CD4-positive, alpha-beta memory T cell (primary cell): ENCODE measurements at regions of chr5 and their contacts with region 1.

Region 1: DNA sequence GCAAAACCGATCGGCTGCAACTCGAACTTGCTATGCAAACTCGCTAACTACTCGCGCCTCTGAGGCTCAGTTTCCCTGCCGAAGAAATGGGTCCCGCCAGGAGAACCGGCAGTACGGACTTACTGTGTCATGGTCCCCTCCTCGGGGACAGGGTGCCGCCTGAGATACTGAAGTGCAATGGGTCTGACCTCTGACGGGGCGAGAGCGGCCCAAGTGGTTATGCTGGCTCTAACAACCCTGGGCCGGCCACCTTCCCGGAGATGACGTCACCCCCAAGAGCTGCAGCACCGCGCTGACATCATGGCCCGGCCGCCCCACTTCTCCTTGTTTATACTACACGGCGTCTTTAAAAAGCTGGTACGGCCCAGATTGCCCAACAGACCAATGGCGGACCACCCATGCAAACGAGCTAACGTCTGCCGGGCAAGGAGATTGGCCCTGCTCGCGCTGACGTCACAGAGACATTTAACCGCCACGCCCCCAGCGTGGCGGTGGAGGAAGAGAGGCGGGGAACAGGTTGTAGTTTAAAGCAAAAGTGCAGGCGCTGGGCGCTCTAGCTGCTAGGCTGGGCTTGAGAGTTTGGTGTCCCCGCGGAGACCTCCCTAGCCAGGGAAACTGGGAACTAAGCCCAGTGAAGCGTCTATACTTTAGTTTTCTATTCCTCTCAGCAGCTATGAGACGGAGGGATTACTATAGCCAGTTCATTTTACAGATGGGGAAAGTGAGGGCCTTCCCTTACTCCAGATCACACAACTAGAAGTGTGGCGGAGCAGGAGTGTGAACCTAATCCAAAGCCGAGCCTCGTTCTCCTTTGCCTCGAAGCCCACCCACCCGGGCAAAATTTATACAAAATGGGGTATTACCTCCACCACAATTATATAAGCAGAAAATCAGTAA is 654 bp upstream of the RNF44 start:
- DNase-seq: peak; percentile 94 to 100 (median 98)
- H3K4me3 ChIP-seq: peak overlapping the region; percentile 85 to 100
- H3K4me3 Mint-ChIP-seq: peak overlapping the region; percentile 97 to 100 (median 98)
- H3K27ac ChIP-seq: peak overlapping the region; percentile 98
- H3K27ac Mint-ChIP-seq: peak overlapping the region; percentile 99 to 100 (median 100)
- H3K4me1 ChIP-seq: peaks cover 70% of the 10 kb centered on the region
- H3K4me1 Mint-ChIP-seq: peaks cover 55 to 86% (median 66%) of the 10 kb centered on the region in 4 donors
- H3K27me3 ChIP-seq: no peaks in the 10 kb centered on the region
- H3K27me3 Mint-ChIP-seq: no peaks in the 10 kb centered on the region

Region 2: GRCh38 chr5:176388444-176389134 is 149.3 kb before region 1 on chr5 and contains the starts of genes HIGD2A and NOP16:
- CTCF ChIA-PET with region 1: no interaction called
- POLR2A ChIA-PET with region 1: interaction called, 29 read pairs
- intact Hi-C with region 1: loop called (anchors 1 kb)
- DNase-seq: peak; percentile 98 to 100 (median 99)
- H3K4me3 ChIP-seq: peak within 1 kb of the TSS; percentile 90 to 99
- H3K4me3 Mint-ChIP-seq: peak within 1 kb of the TSS; percentile 95 to 100 (median 97)
- H3K27ac ChIP-seq: peak within 1 kb of the TSS; percentile 91
- H3K27ac Mint-ChIP-seq: peak within 1 kb of the TSS; percentile 96 to 100 (median 100)
- H3K4me1 ChIP-seq: peaks cover 33% of the 10 kb centered on the region
- H3K4me1 Mint-ChIP-seq: peaks cover 17 to 45% (median 30%) of the 10 kb centered on the region in 4 donors
- H3K27me3 ChIP-seq: no peaks in the 10 kb centered on the region
- H3K27me3 Mint-ChIP-seq: no peaks in the 10 kb centered on the region
- total RNA-seq, gene HIGD2A: 81.3 to 83.4 TPM
- total RNA-seq, gene NOP16: 16.9 to 19.4 TPM

Region 3: DNA sequence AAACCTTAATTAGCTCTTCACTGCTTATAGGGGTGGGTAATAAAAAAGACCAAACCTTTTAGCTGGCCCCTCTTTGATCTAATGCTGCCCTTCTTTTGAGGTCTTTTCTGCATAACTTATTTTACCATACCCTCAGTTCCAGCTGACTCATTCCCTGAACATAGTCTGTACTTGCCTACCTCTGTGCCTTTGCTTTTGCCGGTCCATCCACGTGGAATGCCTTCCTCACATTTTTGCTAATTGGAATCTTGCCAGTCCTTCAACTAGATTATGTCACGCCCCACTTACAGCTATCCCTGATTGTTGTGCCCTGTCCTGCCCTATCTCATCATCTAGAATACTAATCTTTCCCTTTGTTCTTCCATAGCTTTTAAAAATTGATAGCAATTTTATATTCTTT is 45.4 kb before region 1 on chr5:
- CTCF ChIA-PET with region 1: interaction called, 3 read pairs
- POLR2A ChIA-PET with region 1: interaction called, 8 read pairs
- intact Hi-C with region 1: loop called (anchors 5 kb)
- DNase-seq: no peak
- H3K4me3 ChIP-seq: no peak overlapping the region
- H3K4me3 Mint-ChIP-seq: no peak overlapping the region
- H3K27ac ChIP-seq: no peak overlapping the region
- H3K27ac Mint-ChIP-seq: peak overlapping the region in 5 of 7 donors; percentile 8 to 89 (median 53)
- H3K4me1 ChIP-seq: peaks cover 19% of the 10 kb centered on the region
- H3K4me1 Mint-ChIP-seq: peaks cover 14 to 31% (median 21%) of the 10 kb centered on the region in 4 donors
- H3K27me3 ChIP-seq: no peaks in the 10 kb centered on the region
- H3K27me3 Mint-ChIP-seq: no peaks in the 10 kb centered on the region

Region 4: GRCh38 chr5:176596689-176597416 is 59.0 kb after region 1 on chr5:
- CTCF ChIA-PET with region 1: interaction called, 6 read pairs
- POLR2A ChIA-PET with region 1: interaction called, 7 read pairs
- intact Hi-C with region 1: loop called (anchors 2 kb)
- DNase-seq: peak; percentile 66 to 75 (median 73)
- H3K4me3 ChIP-seq: peak overlapping the region in 1 of 2 donors; percentile 37
- H3K4me3 Mint-ChIP-seq: peak overlapping the region; percentile 78 to 89 (median 82)
- H3K27ac ChIP-seq: no peak overlapping the region
- H3K27ac Mint-ChIP-seq: peak overlapping the region in 2 of 7 donors; percentile 75 to 77
- H3K4me1 ChIP-seq: peaks cover 6% of the 10 kb centered on the region
- H3K4me1 Mint-ChIP-seq: peaks cover 0 to 9% (median 6%) of the 10 kb centered on the region in 4 donors
- H3K27me3 ChIP-seq: no peaks in the 10 kb centered on the region
- H3K27me3 Mint-ChIP-seq: no peaks in the 10 kb centered on the region

Region 5: DNA sequence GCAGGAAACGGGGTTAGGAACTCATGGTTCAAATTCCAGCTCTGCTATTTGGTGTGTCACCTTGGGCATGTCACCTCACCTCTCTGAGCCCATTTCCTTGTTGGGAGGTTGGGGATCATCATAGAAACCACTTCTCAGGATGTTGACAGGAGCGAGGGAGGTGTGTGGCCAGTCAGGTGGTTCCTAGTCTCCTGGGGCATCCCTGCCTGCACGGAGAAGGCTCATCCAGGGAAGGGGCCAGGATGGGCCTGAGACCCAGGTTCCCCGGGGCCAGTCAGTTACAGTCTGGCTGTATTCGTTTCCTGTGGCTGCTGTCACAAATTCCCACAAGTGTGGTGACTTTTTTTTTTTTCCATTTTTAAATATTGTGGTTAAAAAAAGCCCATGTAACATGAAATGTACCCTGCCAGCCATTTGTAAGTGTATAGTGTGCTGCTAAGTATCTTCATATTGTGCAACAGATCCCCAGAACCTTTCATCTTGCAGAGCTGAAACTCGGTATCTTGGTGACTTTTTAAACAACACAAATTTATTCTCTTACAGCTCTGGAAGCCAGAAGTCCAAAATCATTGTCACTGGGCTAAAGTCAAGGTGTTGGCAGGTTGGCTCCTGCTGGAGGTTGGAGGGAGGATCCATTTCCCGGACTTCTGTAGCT is 193.8 kb after region 1 on chr5:
- CTCF ChIA-PET with region 1: no interaction called
- POLR2A ChIA-PET with region 1: no interaction called
- intact Hi-C with region 1: no loop called
- DNase-seq: no peak
- H3K4me3 ChIP-seq: no peak overlapping the region
- H3K4me3 Mint-ChIP-seq: no peak overlapping the region
- H3K27ac ChIP-seq: no peak overlapping the region
- H3K27ac Mint-ChIP-seq: no peak overlapping the region
- H3K4me1 ChIP-seq: no peaks in the 10 kb centered on the region
- H3K4me1 Mint-ChIP-seq: no peaks in the 10 kb centered on the region
- H3K27me3 ChIP-seq: no peaks in the 10 kb centered on the region
- H3K27me3 Mint-ChIP-seq: peaks cover 11 to 24% of the 10 kb centered on the region in 2 donors

Region 6: GRCh38 chr5:176985516-176985915 is 447.7 kb after region 1 on chr5:
- CTCF ChIA-PET with region 1: no interaction called
- POLR2A ChIA-PET with region 1: no interaction called
- intact Hi-C with region 1: no loop called
- DNase-seq: peak; percentile 40 to 67 (median 58)
- H3K4me3 ChIP-seq: no peak overlapping the region
- H3K4me3 Mint-ChIP-seq: peak overlapping the region in 7 of 8 donors; percentile 40 to 69 (median 53)
- H3K27ac ChIP-seq: no peak overlapping the region
- H3K27ac Mint-ChIP-seq: peak overlapping the region; percentile 75 to 93 (median 86)
- H3K4me1 ChIP-seq: peaks cover 36% of the 10 kb centered on the region
- H3K4me1 Mint-ChIP-seq: peaks cover 16 to 41% (median 27%) of the 10 kb centered on the region in 4 donors
- H3K27me3 ChIP-seq: no peaks in the 10 kb centered on the region
- H3K27me3 Mint-ChIP-seq: no peaks in the 10 kb centered on the region

Region 7: DNA sequence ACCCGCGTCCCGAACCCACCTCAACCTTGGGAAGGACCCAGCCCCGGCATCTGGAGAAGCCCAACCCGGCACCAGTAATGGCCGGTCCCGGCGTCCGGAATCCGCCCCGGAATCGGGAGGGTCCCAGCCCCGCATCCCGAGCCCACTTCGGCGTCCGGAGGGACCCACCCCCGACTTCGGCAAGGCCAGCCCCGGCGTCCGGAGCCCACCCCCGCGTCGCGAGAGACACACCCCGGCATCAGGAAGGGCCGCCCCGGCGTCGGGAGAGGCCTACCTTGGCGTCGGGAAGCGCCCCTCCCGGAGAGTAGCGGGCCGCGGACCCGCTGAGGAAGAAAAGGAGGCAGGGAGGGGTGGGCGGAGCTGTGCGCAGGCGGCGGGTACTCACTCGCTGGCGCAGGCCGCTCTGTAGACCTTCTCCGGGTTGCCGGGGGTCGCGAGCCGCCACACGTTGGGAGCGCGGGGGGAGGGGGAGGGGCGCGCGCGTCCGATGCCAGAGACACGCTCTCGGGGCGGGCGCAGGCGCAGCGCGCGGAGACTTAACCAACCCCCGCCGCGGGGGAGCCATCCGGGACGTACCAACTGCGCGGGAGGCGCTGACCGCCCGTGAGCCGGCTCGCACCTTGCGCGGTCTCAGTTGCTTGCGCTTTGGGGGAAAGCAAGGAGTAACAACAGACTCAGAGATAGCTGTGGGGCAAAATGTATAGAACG is 468.6 kb after region 1 on chr5 and contains the start of gene UIMC1:
- CTCF ChIA-PET with region 1: no interaction called
- POLR2A ChIA-PET with region 1: interaction called, 3 read pairs
- intact Hi-C with region 1: loop called (anchors 5 kb)
- DNase-seq: peak; percentile 89 to 91 (median 89)
- H3K4me3 ChIP-seq: peak within 1 kb of the TSS; percentile 57 to 62
- H3K4me3 Mint-ChIP-seq: peak within 1 kb of the TSS; percentile 93 to 96 (median 94)
- H3K27ac ChIP-seq: peak within 1 kb of the TSS; percentile 86
- H3K27ac Mint-ChIP-seq: peak within 1 kb of the TSS; percentile 91 to 97 (median 94)
- H3K4me1 ChIP-seq: peaks cover 23% of the 10 kb centered on the region
- H3K4me1 Mint-ChIP-seq: peaks cover 22 to 34% (median 28%) of the 10 kb centered on the region in 4 donors
- H3K27me3 ChIP-seq: no peaks in the 10 kb centered on the region
- H3K27me3 Mint-ChIP-seq: no peaks in the 10 kb centered on the region
- total RNA-seq, gene UIMC1: 57.1 to 61.7 TPM